CD8-positive, alpha-beta T cell (primary cell): ENCODE measurements at regions of chr2 and their contacts with region 1.

Region 1: DNA sequence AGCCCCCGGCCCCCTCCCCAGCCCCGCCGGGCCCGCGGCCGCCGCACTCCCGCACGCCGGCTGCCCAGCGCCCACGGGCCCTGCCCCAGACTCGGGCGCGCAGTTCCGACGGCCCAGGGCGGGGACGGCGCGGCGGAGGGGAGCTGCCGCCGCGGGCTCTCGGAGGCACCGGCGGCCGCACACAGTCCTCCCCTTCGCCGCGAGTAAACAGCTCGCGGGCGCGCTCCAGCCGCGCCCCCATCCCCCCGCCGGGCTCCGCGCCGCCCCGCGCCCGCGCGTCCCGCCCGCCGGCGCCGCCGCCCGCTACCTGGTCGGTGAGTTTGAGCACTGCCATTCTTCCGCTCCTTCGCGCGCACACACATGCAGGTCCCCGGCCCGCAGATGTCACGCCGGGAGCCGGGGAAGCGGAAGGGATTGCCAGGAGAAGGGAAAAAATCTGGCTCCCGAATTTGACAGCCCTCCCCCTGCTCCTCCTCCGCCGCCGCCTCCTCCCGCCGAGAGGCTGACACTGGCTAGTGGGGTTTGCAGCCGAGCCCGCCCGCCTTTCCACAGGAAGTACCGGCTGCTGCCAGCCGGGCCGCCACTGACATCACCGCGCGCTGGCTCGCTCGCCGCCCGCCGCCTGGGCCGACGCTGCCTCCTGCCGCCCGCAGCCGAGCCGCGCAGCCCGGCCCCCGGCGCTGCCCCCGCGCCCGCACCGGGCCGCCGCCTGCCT is at the start of gene ANKRD44:
- DNase-seq: peak; percentile 80 to 95 (median 88)
- ATAC-seq: peak; percentile 74
- H3K4me3 ChIP-seq: peak within 1 kb of the TSS; percentile 71 to 94
- H3K4me3 Mint-ChIP-seq: peak within 1 kb of the TSS; percentile 92
- H3K27ac ChIP-seq: peak within 1 kb of the TSS; percentile 86 to 88
- H3K27ac Mint-ChIP-seq: peak within 1 kb of the TSS; percentile 96
- H3K4me1 ChIP-seq: peaks cover 49% of the 10 kb centered on the region
- H3K4me1 Mint-ChIP-seq: peaks cover 75% of the 10 kb centered on the region
- H3K27me3 ChIP-seq: no peaks in the 10 kb centered on the region
- H3K27me3 Mint-ChIP-seq: no peaks in the 10 kb centered on the region
- CTCF ChIP-seq: no peak
- total RNA-seq, gene ANKRD44: 113 to 115 TPM

Region 2: GRCh38 chr2:196961889-196962288 is 348.5 kb before region 1 on chr2:
- CTCF ChIA-PET with region 1: no interaction called
- POLR2A ChIA-PET with region 1: no interaction called
- intact Hi-C with region 1: no loop called
- DNase-seq: no peak
- ATAC-seq: no peak
- H3K4me3 ChIP-seq: no peak overlapping the region
- H3K4me3 Mint-ChIP-seq: no peak overlapping the region
- H3K27ac ChIP-seq: no peak overlapping the region
- H3K27ac Mint-ChIP-seq: no peak overlapping the region
- H3K4me1 ChIP-seq: no peaks in the 10 kb centered on the region
- H3K4me1 Mint-ChIP-seq: peaks cover 3% of the 10 kb centered on the region
- H3K27me3 ChIP-seq: no peaks in the 10 kb centered on the region
- H3K27me3 Mint-ChIP-seq: no peaks in the 10 kb centered on the region
- CTCF ChIP-seq: no peak

Region 3: DNA sequence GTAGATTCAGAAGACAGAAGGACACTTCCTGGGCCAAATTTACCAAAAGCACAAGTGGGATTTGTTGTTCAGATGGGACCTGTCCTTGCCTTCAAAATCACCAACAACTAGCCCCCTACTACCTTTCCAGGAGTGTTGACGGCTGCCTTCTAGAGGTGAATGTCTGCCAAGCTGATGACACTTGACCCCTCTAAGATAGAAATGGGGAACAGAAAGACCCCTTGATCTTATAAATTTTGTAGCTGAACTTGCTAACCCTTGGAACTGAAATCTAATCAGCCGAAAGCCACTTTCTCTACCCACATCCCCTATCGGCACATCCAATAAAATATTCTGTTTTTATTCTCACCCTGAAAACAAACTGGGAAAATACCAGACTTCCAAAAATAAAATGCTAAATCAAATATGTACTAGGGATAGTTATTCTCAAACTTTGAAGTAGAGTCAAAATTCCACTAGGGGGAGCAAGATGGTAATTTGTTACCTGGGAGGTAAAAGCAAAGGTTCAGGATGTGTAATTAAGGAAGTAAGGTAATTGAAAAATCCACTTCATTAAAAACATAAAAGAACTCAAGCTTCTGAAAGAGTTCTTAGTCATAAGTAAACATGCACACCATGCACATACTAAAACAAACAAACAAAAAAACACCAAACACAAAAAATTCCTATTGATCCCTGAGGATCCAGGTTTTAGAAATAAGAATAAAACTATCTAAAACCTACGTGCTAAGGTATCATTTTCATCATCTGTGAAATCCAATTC is 119.1 kb before region 1 on chr2:
- CTCF ChIA-PET with region 1: interaction called, 89 read pairs
- POLR2A ChIA-PET with region 1: interaction called, 288 read pairs
- intact Hi-C with region 1: loop called (anchors 1 kb)
- DNase-seq: peak in 2 of 9 experiments; percentile 77 to 86
- ATAC-seq: peak; percentile 52
- H3K4me3 ChIP-seq: no peak overlapping the region
- H3K4me3 Mint-ChIP-seq: peak overlapping the region; percentile 10
- H3K27ac ChIP-seq: peak overlapping the region; percentile 16 to 72
- H3K27ac Mint-ChIP-seq: peak overlapping the region; percentile 82
- H3K4me1 ChIP-seq: peaks cover 84% of the 10 kb centered on the region
- H3K4me1 Mint-ChIP-seq: peaks cover 88% of the 10 kb centered on the region
- H3K27me3 ChIP-seq: no peaks in the 10 kb centered on the region
- H3K27me3 Mint-ChIP-seq: no peaks in the 10 kb centered on the region
- CTCF ChIP-seq: peak; percentile 83

Region 4: DNA sequence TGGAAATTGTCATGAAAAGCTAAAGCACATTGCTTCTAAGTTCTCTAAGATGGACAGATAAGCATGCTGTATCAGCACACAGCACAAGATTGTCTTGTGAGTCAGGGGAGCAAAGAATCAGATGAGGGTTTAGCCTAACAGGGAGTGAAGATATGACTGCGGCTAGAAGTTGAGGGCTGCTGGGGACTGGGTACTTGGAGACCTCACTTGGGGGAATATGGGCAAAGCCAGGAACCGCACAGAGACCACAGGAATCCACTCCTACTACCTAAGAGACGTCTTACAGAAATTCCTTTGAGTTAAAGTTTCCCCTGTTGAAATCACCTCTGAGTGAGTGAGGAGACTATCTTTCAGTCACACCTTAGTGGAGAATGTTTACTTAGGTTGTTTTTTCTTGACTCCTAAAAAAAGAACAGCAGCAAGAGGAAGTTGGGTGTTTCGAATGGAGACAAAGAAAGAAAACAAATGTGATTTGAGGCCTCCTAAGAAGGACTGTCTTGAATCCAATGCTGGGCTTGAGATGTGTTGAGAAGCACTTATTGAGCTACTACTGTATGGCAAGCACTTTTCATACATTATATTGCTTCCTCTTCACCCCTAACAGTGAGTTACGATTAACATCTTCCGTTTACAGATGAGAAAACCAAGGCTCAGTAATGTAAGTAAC is 100.6 kb before region 1 on chr2:
- CTCF ChIA-PET with region 1: interaction called, 18 read pairs
- POLR2A ChIA-PET with region 1: interaction called, 288 read pairs
- intact Hi-C with region 1: no loop called
- DNase-seq: peak in 7 of 9 experiments; percentile 22 to 73 (median 48)
- ATAC-seq: peak; percentile 10
- H3K4me3 ChIP-seq: peak overlapping the region in 1 of 2 experiments; percentile 11
- H3K4me3 Mint-ChIP-seq: peak overlapping the region; percentile 54
- H3K27ac ChIP-seq: peak overlapping the region; percentile 24 to 73
- H3K27ac Mint-ChIP-seq: peak overlapping the region; percentile 100
- H3K4me1 ChIP-seq: peaks cover 99% of the 10 kb centered on the region
- H3K4me1 Mint-ChIP-seq: peaks cover 97% of the 10 kb centered on the region
- H3K27me3 ChIP-seq: no peaks in the 10 kb centered on the region
- H3K27me3 Mint-ChIP-seq: no peaks in the 10 kb centered on the region
- CTCF ChIP-seq: no peak

Region 5: DNA sequence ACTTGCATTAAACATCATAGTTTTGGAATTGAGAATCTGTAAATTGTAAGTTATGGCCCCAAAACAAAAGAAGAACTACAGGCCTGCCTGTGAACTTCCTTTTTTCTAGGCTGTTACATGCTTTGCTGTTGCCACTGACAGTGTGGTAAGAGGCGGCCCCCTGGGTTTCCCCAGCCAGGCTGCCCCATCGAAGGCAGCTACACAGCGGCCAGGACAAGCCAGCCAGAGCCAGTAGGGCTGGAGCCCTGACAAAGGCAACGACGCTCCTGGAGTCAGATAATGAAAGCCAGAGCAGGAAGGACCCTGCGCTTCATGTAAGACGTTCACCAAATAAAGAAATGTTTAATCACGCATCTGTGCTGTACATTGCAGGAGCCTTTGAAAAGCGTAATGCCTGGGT is 54.9 kb before region 1 on chr2:
- CTCF ChIA-PET with region 1: interaction called, 11 read pairs
- POLR2A ChIA-PET with region 1: interaction called, 17 read pairs
- intact Hi-C with region 1: loop called (anchors 1 to 5 kb)
- DNase-seq: peak; percentile 45 to 92 (median 72)
- ATAC-seq: peak; percentile 79
- H3K4me3 ChIP-seq: peak overlapping the region; percentile 9 to 38
- H3K4me3 Mint-ChIP-seq: peak overlapping the region; percentile 74
- H3K27ac ChIP-seq: peak overlapping the region; percentile 46 to 70
- H3K27ac Mint-ChIP-seq: peak overlapping the region; percentile 95
- H3K4me1 ChIP-seq: peaks cover 83% of the 10 kb centered on the region
- H3K4me1 Mint-ChIP-seq: peaks cover 82% of the 10 kb centered on the region
- H3K27me3 ChIP-seq: no peaks in the 10 kb centered on the region
- H3K27me3 Mint-ChIP-seq: no peaks in the 10 kb centered on the region
- CTCF ChIP-seq: no peak

Region 6: GRCh38 chr2:197268786-197269584 is 41.4 kb before region 1 on chr2:
- CTCF ChIA-PET with region 1: interaction called, 4 read pairs
- POLR2A ChIA-PET with region 1: interaction called, 34 read pairs
- intact Hi-C with region 1: loop called in 1 of 2 experiments (anchors 1 kb)
- DNase-seq: peak in 3 of 9 experiments; percentile 32 to 80 (median 64)
- ATAC-seq: peak; percentile 35
- H3K4me3 ChIP-seq: no peak overlapping the region
- H3K4me3 Mint-ChIP-seq: peak overlapping the region; percentile 21
- H3K27ac ChIP-seq: peak overlapping the region; percentile 30 to 73
- H3K27ac Mint-ChIP-seq: peak overlapping the region; percentile 89
- H3K4me1 ChIP-seq: peaks cover 89% of the 10 kb centered on the region
- H3K4me1 Mint-ChIP-seq: peaks cover 95% of the 10 kb centered on the region
- H3K27me3 ChIP-seq: no peaks in the 10 kb centered on the region
- H3K27me3 Mint-ChIP-seq: no peaks in the 10 kb centered on the region
- CTCF ChIP-seq: no peak

Region 7: GRCh38 chr2:197356136-197356535 is 45.7 kb after region 1 on chr2:
- CTCF ChIA-PET with region 1: interaction called, 4 read pairs
- POLR2A ChIA-PET with region 1: no interaction called
- intact Hi-C with region 1: loop called in 1 of 2 experiments (anchors 5 kb)
- DNase-seq: peak in 2 of 9 experiments; percentile 33 to 47
- ATAC-seq: peak; percentile 62
- H3K4me3 ChIP-seq: no peak overlapping the region
- H3K4me3 Mint-ChIP-seq: no peak overlapping the region
- H3K27ac ChIP-seq: no peak overlapping the region
- H3K27ac Mint-ChIP-seq: peak overlapping the region; percentile 28
- H3K4me1 ChIP-seq: peaks cover 15% of the 10 kb centered on the region
- H3K4me1 Mint-ChIP-seq: peaks cover 23% of the 10 kb centered on the region
- H3K27me3 ChIP-seq: no peaks in the 10 kb centered on the region
- H3K27me3 Mint-ChIP-seq: no peaks in the 10 kb centered on the region
- CTCF ChIP-seq: peak; percentile 50

Region 8: DNA sequence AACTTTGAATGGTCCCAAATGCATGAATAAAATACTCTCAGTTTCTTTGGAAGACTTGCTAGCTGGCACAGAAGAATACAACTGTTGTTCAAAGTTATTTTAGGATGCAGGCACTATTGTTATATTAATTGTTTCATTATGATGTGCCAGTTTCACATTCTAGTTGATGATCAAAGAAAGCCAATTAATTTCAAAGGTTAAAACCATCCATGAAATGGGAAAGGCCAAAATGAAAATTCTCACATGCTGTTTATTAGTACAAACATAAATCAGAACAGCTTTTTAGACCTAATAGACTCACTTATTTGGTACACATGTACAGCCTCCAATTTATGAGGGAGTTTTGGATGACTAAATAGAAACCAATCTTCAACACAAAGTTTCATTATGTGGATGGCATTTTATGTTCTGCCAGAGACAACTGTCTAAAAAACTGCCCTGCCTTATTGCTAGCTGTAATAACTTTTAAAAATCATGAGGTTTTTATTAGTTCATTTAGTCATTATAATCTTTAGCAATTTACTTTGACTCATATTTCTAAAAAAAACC is 322.8 kb after region 1 on chr2:
- CTCF ChIA-PET with region 1: no interaction called
- POLR2A ChIA-PET with region 1: no interaction called
- intact Hi-C with region 1: no loop called
- DNase-seq: no peak
- ATAC-seq: no peak
- H3K4me3 ChIP-seq: no peak overlapping the region
- H3K4me3 Mint-ChIP-seq: no peak overlapping the region
- H3K27ac ChIP-seq: no peak overlapping the region
- H3K27ac Mint-ChIP-seq: no peak overlapping the region
- H3K4me1 ChIP-seq: no peaks in the 10 kb centered on the region
- H3K4me1 Mint-ChIP-seq: no peaks in the 10 kb centered on the region
- H3K27me3 ChIP-seq: no peaks in the 10 kb centered on the region
- H3K27me3 Mint-ChIP-seq: no peaks in the 10 kb centered on the region
- CTCF ChIP-seq: no peak